IMR-90 (cell line): ENCODE measurements at regions of chr10 and their contacts with region 1.

Region 1: GRCh38 chr10:78657163-78657861 is 411.5 kb upstream of the ZMIZ1 start:
- DNase-seq: peak; percentile 43
- ATAC-seq: peak; percentile 88
- H3K4me3 ChIP-seq: no peak overlapping the region
- H3K27ac ChIP-seq: no peak overlapping the region
- H3K4me1 ChIP-seq: 0 out of 2 replicates have a peak, but pooled peaks cover 2% of the 10 kb centered on the region
- H3K27me3 ChIP-seq: peaks cover 5% of the 10 kb centered on the region; the same call in 1 of the 2 replicates
- CTCF ChIP-seq: peak; percentile 73
- POLR2A ChIP-seq: no peak
- RAD21 ChIP-seq: peak; percentile 78

Region 2: DNA sequence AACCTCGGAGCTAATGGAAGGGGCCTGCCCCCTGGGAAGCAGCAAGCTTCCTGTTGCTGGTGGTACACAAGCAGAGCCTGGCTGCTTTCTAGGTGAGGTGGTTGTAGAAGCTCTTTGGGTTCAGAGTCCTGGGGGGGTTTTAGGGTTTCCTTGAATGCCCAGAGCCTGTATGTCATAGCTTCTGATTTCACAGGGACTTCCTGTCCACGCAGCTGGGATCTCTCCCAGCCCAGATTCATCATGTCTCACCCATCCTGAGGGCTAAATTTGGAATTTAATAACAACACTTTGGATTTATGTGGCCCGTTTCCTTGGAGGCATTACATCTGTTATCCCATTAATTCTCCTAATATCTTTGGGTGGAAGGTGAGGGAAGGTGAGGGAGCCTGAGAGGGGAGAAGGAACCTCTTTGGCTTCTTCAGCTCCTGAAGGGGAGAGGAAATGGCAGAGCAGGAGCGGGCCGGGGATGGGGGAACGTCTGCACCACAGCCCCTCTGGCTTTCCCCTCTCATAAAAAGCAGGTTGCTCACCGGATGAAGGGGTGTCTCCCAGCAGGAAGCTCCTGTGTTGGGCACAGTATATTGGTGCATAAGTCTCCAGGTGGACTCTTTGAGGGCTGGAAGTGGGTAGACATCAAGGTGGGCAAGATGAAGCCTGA is 604.0 kb before region 1 on chr10:
- CTCF ChIA-PET with region 1: no interaction called
- POLR2A ChIA-PET with region 1: no interaction called
- dilution Hi-C with region 1: no loop called
- in situ Hi-C with region 1: loop called (anchors 10 kb)
- intact Hi-C with region 1: no loop called
- DNase-seq: peak; percentile 89
- ATAC-seq: peak; percentile 90
- H3K4me3 ChIP-seq: no peak overlapping the region
- H3K27ac ChIP-seq: peak overlapping the region; percentile 35; the same call in 1 of the 2 replicates
- H3K4me1 ChIP-seq: peaks cover 12% of the 10 kb centered on the region
- H3K27me3 ChIP-seq: no peaks in the 10 kb centered on the region
- CTCF ChIP-seq: no peak
- POLR2A ChIP-seq: no peak
- RAD21 ChIP-seq: no peak

Region 3: GRCh38 chr10:78623578-78624215 is 33.6 kb before region 1 on chr10:
- CTCF ChIA-PET with region 1: no interaction called
- POLR2A ChIA-PET with region 1: no interaction called
- dilution Hi-C with region 1: no loop called
- in situ Hi-C with region 1: no loop called
- intact Hi-C with region 1: loop called (anchors 2 kb)
- DNase-seq: peak; percentile 90
- ATAC-seq: peak; percentile 97
- H3K4me3 ChIP-seq: no peak overlapping the region
- H3K27ac ChIP-seq: no peak overlapping the region
- H3K4me1 ChIP-seq: peaks cover 5% of the 10 kb centered on the region
- H3K27me3 ChIP-seq: peaks cover 17% of the 10 kb centered on the region
- CTCF ChIP-seq: no peak
- POLR2A ChIP-seq: no peak
- RAD21 ChIP-seq: no peak; the same call in 1 of the 2 replicates